Activated B cell treated with CpG ODN at 0.5 μM for 24 hours (primary cell): ENCODE measurements at regions of chr3 and their contacts with region 1.

Region 1: DNA sequence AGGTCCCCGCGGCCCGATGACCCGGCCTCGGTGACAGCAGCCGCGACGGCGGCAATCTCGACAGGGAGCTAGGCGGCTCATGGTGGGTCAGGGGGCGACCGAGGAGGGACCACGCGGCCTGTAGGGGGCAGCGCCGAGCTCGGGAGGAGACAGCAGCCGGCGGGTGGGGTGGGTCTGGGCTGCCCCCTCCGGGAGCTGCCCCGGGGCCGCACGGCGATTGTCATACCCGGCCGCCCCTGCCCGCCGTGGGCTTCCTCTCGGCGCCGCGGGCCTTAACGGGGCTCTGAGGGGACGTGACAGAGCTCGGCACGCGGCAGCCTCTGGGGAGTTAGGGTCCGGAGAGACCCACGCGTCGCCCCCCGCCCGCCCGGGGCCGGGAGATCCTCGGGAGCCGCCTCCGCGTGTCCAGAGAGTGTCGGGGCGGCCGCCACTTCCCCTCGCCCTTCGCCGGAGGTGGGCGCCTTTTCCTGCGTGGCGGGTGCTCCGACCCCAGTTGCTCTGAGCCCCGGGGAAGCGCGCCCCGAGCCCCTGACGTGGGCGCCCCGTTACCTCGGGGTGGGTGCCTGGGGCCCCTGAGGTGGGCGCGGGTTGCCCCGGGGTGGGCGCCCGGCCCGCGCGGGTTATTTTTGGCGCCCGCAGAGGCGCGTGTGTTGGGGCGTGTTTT is 539 bp upstream of the PLCL2 start:
- DNase-seq: peak; percentile 76
- ATAC-seq: peak; percentile 62
- H3K4me3 Mint-ChIP-seq: peak overlapping the region; percentile 94
- H3K27ac Mint-ChIP-seq: peak overlapping the region; percentile 96
- H3K4me1 Mint-ChIP-seq: peaks cover 43% of the 10 kb centered on the region
- H3K27me3 Mint-ChIP-seq: no peaks in the 10 kb centered on the region
- CTCF ChIP-seq: no peak

Region 2: DNA sequence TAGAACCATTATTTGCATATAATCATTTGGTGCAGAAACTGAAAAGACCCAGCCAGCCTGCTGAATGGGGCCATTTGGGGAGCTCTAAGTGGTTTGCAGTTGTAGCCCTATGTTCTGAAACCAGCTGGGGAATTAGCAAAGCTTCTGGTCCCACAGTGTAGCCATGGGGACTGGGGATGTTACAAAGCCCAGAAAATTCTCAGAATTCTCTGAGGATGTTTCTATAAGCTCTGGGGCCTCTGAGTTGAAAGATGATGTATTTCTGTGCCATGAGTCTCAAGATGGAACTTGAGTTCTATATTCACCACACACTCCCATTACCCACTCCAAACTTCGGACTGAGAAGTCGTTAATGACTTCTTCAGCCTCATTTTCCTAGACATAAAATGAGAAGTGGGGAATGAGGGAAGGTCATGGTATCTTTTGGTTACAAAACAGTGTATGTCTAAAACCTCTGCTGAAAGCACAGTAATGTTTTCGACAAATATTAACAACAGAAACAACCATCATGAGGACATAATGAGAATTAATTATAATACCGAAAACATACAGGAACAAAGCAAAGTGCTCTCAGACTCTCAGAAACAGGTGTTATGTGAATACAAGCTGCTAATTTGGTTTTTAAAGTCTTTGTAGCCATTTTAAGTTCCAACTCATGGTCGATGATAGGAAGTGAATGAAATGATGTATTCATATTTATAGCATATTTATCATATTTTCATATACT is 460.1 kb before region 1 on chr3:
- CTCF ChIA-PET with region 1: no interaction called
- POLR2A ChIA-PET with region 1: no interaction called
- intact Hi-C with region 1: no loop called
- DNase-seq: no peak
- ATAC-seq: no peak
- H3K4me3 Mint-ChIP-seq: no peak overlapping the region
- H3K27ac Mint-ChIP-seq: no peak overlapping the region
- H3K4me1 Mint-ChIP-seq: peaks cover 58% of the 10 kb centered on the region
- H3K27me3 Mint-ChIP-seq: no peaks in the 10 kb centered on the region
- CTCF ChIP-seq: no peak

Region 3: DNA sequence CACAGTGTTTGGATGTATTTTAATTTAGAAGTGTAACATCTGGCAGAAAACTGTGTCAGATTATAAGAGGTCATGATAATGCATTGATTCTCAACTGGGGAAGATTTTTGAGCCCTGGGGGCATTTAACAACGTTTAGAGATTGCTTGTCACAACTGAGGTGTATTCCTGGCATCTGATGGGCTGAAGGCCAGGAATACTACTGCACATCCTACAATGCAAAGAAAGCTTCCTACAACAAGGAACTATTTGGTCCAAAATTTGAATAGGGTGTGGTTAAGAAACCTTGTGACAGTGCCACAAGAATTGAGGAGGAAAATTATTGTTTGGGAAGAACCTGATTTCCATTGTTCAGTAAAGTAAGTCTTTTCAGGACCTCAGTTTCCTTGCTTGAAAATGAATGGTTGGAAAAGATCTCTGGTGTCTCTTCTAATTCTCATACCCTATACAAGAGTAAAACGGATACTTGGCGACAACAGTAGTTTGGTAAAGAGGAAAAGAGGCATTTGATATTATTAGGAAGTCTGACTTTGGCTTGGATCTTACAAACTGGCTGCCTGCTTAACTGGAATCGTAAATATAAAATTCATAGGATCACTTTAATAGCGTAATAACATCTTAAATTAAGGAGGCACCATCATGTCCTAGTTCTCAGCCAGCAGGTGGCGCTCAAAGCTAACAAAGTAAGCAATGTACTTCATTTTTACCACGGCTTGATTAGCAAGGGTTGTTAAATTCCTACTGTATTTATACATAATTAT is 283.3 kb before region 1 on chr3:
- CTCF ChIA-PET with region 1: interaction called, 6 read pairs
- POLR2A ChIA-PET with region 1: no interaction called
- intact Hi-C with region 1: loop called (anchors 1 kb)
- DNase-seq: peak; percentile 54
- ATAC-seq: peak; percentile 61
- H3K4me3 Mint-ChIP-seq: no peak overlapping the region
- H3K27ac Mint-ChIP-seq: no peak overlapping the region
- H3K4me1 Mint-ChIP-seq: peaks cover 2% of the 10 kb centered on the region
- H3K27me3 Mint-ChIP-seq: peaks cover 5% of the 10 kb centered on the region
- CTCF ChIP-seq: no peak

Region 4: DNA sequence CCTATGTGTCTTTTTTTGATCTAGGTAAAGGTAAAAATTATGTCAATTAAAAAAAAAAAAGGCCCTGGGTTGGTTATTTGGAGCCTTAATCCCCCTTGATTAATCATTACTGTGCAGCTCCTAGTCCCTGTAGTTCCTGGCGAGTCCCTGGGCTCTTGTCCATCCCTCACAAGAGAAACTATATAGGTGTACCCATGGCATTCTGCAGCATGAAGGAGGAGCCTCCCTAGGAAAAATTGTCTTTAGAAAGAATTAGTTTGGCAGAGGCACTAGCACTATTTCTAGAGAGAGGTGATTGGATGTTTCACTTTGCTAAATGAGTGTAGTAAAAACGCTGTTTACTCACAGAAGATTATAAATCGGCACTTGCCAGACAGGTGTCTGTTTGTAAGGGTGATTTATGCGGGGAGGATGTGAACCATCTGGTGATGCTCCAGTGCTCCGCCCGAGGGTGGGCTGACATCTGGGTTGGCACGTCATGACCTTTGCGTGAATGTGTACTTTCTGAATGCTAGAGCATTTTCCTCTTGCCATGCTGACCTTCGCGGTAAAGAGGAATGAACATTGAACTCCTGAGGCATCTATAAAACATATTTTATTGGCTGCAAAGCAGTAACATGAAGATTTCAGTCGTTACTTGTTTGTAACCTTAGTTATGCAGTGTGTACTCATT is 13.2 kb after region 1 on chr3:
- CTCF ChIA-PET with region 1: interaction called, 9 read pairs
- POLR2A ChIA-PET with region 1: interaction called, 54 read pairs
- intact Hi-C with region 1: loop called (anchors 1 kb)
- DNase-seq: peak; percentile 39
- ATAC-seq: peak; percentile 89
- H3K4me3 Mint-ChIP-seq: peak overlapping the region; percentile 66
- H3K27ac Mint-ChIP-seq: peak overlapping the region; percentile 86
- H3K4me1 Mint-ChIP-seq: peaks cover 90% of the 10 kb centered on the region
- H3K27me3 Mint-ChIP-seq: no peaks in the 10 kb centered on the region
- CTCF ChIP-seq: no peak

Region 5: GRCh38 chr3:16928386-16929132 is 44.3 kb after region 1 on chr3:
- CTCF ChIA-PET with region 1: interaction called, 3 read pairs
- POLR2A ChIA-PET with region 1: interaction called, 9 read pairs
- intact Hi-C with region 1: loop called (anchors 2 kb)
- DNase-seq: no peak
- ATAC-seq: peak; percentile 10
- H3K4me3 Mint-ChIP-seq: no peak overlapping the region
- H3K27ac Mint-ChIP-seq: peak overlapping the region; percentile 0
- H3K4me1 Mint-ChIP-seq: peaks cover 80% of the 10 kb centered on the region
- H3K27me3 Mint-ChIP-seq: no peaks in the 10 kb centered on the region
- CTCF ChIP-seq: no peak

Region 6: GRCh38 chr3:17195856-17196604 is 311.8 kb after region 1 on chr3:
- CTCF ChIA-PET with region 1: interaction called, 3 read pairs
- POLR2A ChIA-PET with region 1: interaction called, 10 read pairs
- intact Hi-C with region 1: loop called (anchors 1 kb)
- DNase-seq: peak; percentile 22
- ATAC-seq: peak; percentile 86
- H3K4me3 Mint-ChIP-seq: peak overlapping the region; percentile 56
- H3K27ac Mint-ChIP-seq: peak overlapping the region; percentile 91
- H3K4me1 Mint-ChIP-seq: peaks cover 44% of the 10 kb centered on the region
- H3K27me3 Mint-ChIP-seq: no peaks in the 10 kb centered on the region
- CTCF ChIP-seq: no peak